ENCODE measurements at regions of chr1 and their contacts with region 1.

Region 1: DNA sequence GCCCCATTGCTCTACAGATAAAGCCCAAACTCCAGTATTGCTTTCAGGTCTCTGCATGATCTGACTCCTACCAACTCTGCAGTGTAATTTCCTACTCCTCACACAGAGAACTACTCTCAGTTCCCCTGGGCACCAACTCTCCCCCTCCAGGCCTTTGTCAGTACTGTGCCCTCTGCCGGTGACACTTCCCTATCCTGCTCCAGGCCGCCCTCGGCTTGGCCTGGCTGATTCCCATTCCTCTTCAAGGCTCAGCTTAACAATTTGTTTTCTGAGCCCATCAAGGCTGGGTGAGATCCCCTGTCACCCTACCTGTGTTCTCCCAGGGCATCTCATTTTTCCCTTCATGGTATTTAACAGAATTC is 2.6 kb downstream of the SLAMF8 start:
- DNase-seq: peak; percentile 68 to 81 (median 81)
- H3K4me3 ChIP-seq: no peak overlapping the region
- H3K27ac ChIP-seq: no peak overlapping the region
- H3K4me1 ChIP-seq: peaks cover 4 to 23% (median 18%) of the 10 kb centered on the region in 4 experiments
- H3K27me3 ChIP-seq: peaks cover 0 to 1% (median 0%) of the 10 kb centered on the region in 5 experiments

Region 2: GRCh38 chr1:159664247-159664646 is 165.0 kb before region 1 on chr1:
- CTCF ChIA-PET with region 1: no interaction called
- POLR2A ChIA-PET with region 1: no interaction called
- DNase-seq: peak in 1 of 3 donors; percentile 10
- H3K4me3 ChIP-seq: no peak overlapping the region
- H3K27ac ChIP-seq: no peak overlapping the region
- H3K4me1 ChIP-seq: no peaks in the 10 kb centered on the region
- H3K27me3 ChIP-seq: no peaks in the 10 kb centered on the region

Region 3: GRCh38 chr1:159804924-159805323 is 24.3 kb before region 1 on chr1:
- CTCF ChIA-PET with region 1: interaction called, 111 read pairs
- POLR2A ChIA-PET with region 1: no interaction called
- DNase-seq: no peak
- H3K4me3 ChIP-seq: no peak overlapping the region
- H3K27ac ChIP-seq: no peak overlapping the region
- H3K4me1 ChIP-seq: peaks cover 0 to 11% (median 7%) of the 10 kb centered on the region in 4 experiments
- H3K27me3 ChIP-seq: peaks cover 0 to 2% (median 0%) of the 10 kb centered on the region in 5 experiments

Region 4: DNA sequence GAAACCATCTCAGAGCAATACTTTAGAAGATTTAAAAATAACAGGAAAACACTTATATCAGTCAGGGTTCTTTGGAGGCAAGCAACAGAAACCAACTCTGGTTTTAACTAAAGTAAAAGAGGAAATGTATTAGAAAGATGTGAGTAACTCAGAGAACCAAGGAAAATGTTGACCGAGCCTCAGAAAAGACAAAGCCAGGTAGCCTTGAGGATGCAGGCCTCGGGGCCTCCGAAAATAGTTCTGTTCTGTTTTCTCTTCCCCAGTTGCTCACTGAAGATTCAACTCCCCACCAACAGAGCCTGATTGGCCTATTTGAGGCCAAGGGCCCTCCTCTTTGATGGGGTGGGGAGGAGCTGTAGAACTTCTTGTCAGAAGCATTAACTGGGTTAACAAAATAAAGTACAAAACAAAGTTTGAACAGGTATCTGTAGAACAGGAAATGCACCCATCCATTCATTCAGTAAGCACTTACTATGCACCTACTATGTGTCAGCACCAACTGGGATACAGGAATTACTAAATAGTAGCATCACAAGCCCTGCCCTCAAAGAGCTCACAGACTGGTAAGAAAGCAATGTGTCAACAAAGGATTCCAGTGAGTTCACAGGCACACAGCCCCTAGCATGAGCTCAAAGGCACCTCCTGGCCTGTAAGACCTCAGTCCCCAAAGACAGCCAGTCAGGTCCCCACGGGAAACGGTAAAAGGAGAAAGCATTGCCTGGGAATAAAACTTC is 10.0 kb after region 1 on chr1:
- CTCF ChIA-PET with region 1: interaction called, 13 read pairs
- POLR2A ChIA-PET with region 1: no interaction called
- DNase-seq: peak in 2 of 3 donors; percentile 46 to 57
- H3K4me3 ChIP-seq: no peak overlapping the region
- H3K27ac ChIP-seq: no peak overlapping the region
- H3K4me1 ChIP-seq: peaks cover 0 to 5% (median 0%) of the 10 kb centered on the region in 4 experiments
- H3K27me3 ChIP-seq: no peaks in the 10 kb centered on the region

Region 5: GRCh38 chr1:159854693-159855192 is 25.5 kb after region 1 on chr1:
- CTCF ChIA-PET with region 1: interaction called, 10 read pairs
- POLR2A ChIA-PET with region 1: no interaction called
- DNase-seq: peak; percentile 68 to 88 (median 76)
- H3K4me3 ChIP-seq: peak overlapping the region; percentile 60 to 84 (median 68)
- H3K27ac ChIP-seq: peak overlapping the region in 1 of 2 experiments; percentile 47
- H3K4me1 ChIP-seq: peaks cover 2 to 20% (median 14%) of the 10 kb centered on the region in 4 experiments
- H3K27me3 ChIP-seq: no peaks in the 10 kb centered on the region

Region 6: GRCh38 chr1:159867683-159868064 is 38.4 kb after region 1 on chr1:
- CTCF ChIA-PET with region 1: no interaction called
- POLR2A ChIA-PET with region 1: no interaction called
- DNase-seq: no peak
- H3K4me3 ChIP-seq: no peak overlapping the region
- H3K27ac ChIP-seq: no peak overlapping the region
- H3K4me1 ChIP-seq: peaks cover 0 to 16% (median 8%) of the 10 kb centered on the region in 4 experiments
- H3K27me3 ChIP-seq: no peaks in the 10 kb centered on the region